BJ (cell line): ENCODE measurements at regions of chr1 and their contacts with region 1.

Region 1: DNA sequence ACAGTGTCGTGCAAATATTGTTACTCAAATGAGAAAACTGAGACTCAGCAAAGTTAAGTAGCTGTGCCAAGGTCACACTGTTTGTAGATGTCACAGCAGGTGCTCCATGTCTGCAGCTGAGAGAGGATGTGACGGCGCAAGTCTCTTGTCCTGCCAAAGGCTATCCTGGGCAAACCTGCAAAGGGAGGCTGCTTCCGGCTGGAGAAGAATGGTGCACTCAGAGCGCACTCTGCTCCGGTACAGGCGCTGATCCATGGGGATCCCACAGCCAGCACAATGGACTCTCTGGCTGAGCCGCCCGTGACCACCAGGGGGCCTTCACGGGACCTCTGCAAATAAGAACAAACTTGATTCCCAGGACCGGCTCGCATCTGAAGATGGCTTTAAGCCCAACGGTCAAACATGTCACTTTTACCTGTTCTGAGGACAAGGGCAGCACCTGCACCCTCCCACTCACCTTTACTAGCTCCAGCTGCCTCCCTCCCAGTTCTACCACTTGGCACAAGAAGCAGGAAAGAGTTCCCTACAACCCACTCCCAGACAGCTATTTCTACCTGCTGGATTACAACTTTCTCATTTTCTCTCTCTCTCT is 21.9 kb downstream of the RD3 start:
- DNase-seq: no peak
- H3K4me3 ChIP-seq: no peak overlapping the region
- H3K27me3 ChIP-seq: peaks cover 8% of the 10 kb centered on the region
- CTCF ChIP-seq: peak; percentile 98

Region 2: DNA sequence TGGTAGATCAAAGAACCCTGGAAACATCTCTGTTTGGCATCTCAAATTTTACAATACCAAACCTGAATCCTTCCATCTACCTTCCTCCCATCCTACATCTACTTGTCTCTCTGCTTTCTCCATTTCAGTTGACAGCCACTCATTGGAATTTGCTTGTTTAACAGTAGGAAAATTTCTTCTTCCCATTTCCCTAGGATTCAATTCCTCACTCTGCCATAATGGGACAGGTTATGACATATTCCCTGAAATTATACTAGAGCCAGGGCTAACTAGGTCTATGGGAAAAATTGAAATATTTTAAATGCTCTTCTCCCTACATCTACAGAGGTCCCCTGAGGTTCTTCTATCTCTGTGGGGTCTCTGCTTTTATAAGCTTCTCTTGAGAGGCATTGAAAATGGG is 593.8 kb before region 1 on chr1:
- CTCF ChIA-PET with region 1: no interaction called
- POLR2A ChIA-PET with region 1: no interaction called
- DNase-seq: no peak
- H3K4me3 ChIP-seq: no peak overlapping the region
- H3K27me3 ChIP-seq: no peaks in the 10 kb centered on the region
- CTCF ChIP-seq: no peak

Region 3: GRCh38 chr1:211323156-211324063 is 146.6 kb before region 1 on chr1:
- CTCF ChIA-PET with region 1: interaction called, 24 read pairs
- POLR2A ChIA-PET with region 1: no interaction called
- DNase-seq: no peak
- H3K4me3 ChIP-seq: no peak overlapping the region
- H3K27me3 ChIP-seq: no peaks in the 10 kb centered on the region
- CTCF ChIP-seq: peak; percentile 88

Region 4: DNA sequence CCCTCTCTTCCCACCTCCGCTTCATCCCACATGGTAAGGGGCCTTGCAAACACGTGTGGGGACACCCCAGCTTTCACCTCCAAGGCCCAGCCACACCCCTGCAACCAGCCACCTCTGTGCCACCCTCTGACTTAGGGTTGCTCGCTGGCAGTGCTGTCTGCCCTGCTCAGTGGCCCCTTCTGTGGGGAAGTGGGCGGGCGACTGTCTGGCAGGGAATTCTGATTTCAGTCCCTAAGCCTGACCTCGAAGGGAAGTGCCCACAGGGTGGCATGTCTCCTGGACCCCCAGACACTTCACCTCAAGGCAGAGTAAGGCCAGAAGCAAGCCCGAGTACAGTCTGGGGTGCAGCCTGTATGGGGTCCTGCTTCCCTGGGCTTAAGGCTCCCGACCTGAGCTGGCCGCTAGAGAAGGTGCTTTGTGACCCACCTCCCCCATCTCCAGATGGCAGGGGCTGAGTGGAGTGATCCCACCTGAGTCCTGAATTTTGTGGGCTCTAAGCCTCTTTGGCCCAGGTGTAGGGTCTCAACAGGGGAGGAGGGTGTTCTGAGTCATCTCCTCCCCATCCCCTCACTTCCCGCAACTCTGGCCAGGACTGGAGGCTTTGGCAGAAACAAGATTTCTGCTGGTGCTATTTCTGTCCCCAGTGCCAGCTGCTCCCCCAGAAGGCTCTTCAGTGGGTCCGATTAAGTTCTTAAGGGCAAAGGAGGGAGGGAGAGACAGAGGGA is 14.9 kb after region 1 on chr1:
- CTCF ChIA-PET with region 1: interaction called, 78 read pairs
- POLR2A ChIA-PET with region 1: no interaction called
- DNase-seq: no peak
- H3K4me3 ChIP-seq: no peak overlapping the region
- H3K27me3 ChIP-seq: peaks cover 6% of the 10 kb centered on the region; the same call in 1 of the 2 replicates
- CTCF ChIP-seq: no peak

Region 5: GRCh38 chr1:211492511-211493132 is 22.6 kb after region 1 on chr1:
- CTCF ChIA-PET with region 1: interaction called, 10 read pairs
- POLR2A ChIA-PET with region 1: no interaction called
- DNase-seq: no peak
- H3K4me3 ChIP-seq: no peak overlapping the region
- H3K27me3 ChIP-seq: peaks cover 5% of the 10 kb centered on the region
- CTCF ChIP-seq: no peak

Region 6: GRCh38 chr1:211501711-211502400 is 31.8 kb after region 1 on chr1:
- CTCF ChIA-PET with region 1: interaction called, 10 read pairs
- POLR2A ChIA-PET with region 1: no interaction called
- DNase-seq: no peak
- H3K4me3 ChIP-seq: no peak overlapping the region
- H3K27me3 ChIP-seq: peaks cover 10% of the 10 kb centered on the region
- CTCF ChIP-seq: no peak

Region 7: GRCh38 chr1:211551628-211552460 is 81.8 kb after region 1 on chr1:
- CTCF ChIA-PET with region 1: no interaction called
- POLR2A ChIA-PET with region 1: no interaction called
- DNase-seq: no peak
- H3K4me3 ChIP-seq: no peak overlapping the region
- H3K27me3 ChIP-seq: peaks cover 6% of the 10 kb centered on the region
- CTCF ChIP-seq: no peak